Heart left ventricle (tissue), 16 donors: ENCODE measurements at regions of chr16 and their contacts with region 1.

Region 1: GRCh38 chr16:68503334-68503733 is 35.8 kb upstream of the ZFP90 start:
- DNase-seq: no peak
- ATAC-seq: no peak
- H3K4me3 ChIP-seq: no peak overlapping the region
- H3K27ac ChIP-seq: no peak overlapping the region
- H3K4me1 ChIP-seq: no peaks in the 10 kb centered on the region
- H3K27me3 ChIP-seq: no peaks in the 10 kb centered on the region
- CTCF ChIP-seq: no peak
- POLR2A ChIP-seq: no peak

Region 2: DNA sequence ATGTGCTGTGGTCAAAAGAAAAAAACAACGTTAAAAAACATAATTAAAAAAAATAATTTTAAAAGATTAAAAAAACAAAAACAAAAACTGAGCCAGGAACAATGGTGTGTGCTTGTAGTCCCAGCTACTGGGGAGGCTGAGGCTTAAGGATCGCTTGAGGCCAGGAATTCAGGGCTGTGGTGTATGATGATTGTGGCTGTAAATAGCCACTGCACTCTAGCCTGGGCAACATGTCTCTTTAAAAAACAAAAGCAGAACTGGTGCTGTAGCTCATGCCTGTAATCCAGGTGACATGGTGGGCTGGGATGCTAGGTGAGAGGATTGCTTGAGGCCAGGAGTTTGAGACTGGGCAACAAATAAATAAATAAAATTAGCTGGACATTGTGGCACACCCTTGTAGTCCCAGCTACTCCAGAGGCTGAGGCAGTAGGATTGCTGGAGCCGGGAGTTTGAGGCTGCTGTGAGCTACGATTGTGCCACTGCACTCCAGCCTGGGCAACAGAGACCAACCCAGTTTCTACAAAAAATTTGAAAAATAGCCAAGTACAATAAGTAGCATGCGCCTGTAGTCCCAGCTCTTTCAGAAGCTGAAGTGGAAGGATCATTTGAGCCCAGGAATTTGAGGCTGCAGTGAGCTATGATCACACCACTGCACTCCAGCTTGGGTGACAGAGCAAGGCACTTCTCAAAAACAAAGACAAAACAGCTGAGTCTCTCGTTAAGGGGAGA is 374.6 kb before region 1 on chr16:
- intact Hi-C with region 1: no loop called
- DNase-seq: no peak
- ATAC-seq: peak; percentile 56 to 69 (median 60)
- H3K4me3 ChIP-seq: no peak overlapping the region
- H3K27ac ChIP-seq: peak overlapping the region in 7 of 12 donors; percentile 7 to 44 (median 28)
- H3K4me1 ChIP-seq: peaks cover 0 to 40% (median 17%) of the 10 kb centered on the region in 12 donors
- H3K27me3 ChIP-seq: no peaks in the 10 kb centered on the region
- CTCF ChIP-seq: no peak
- POLR2A ChIP-seq: no peak

Region 3: GRCh38 chr16:68406451-68407152 is 96.7 kb before region 1 on chr16:
- intact Hi-C with region 1: loop called in 1 of 10 experiments (anchors 10 kb)
- DNase-seq: no peak
- ATAC-seq: no peak
- H3K4me3 ChIP-seq: no peak overlapping the region
- H3K27ac ChIP-seq: no peak overlapping the region
- H3K4me1 ChIP-seq: no peaks in the 10 kb centered on the region
- H3K27me3 ChIP-seq: peaks cover 0 to 24% (median 0%) of the 10 kb centered on the region in 9 donors
- CTCF ChIP-seq: no peak
- POLR2A ChIP-seq: no peak

Region 4: GRCh38 chr16:68786685-68787418 is 283.5 kb after region 1 on chr16:
- intact Hi-C with region 1: no loop called
- DNase-seq: peak in 2 of 5 donors; percentile 13 to 20
- ATAC-seq: peak in 2 of 4 donors; percentile 24 to 28
- H3K4me3 ChIP-seq: no peak overlapping the region
- H3K27ac ChIP-seq: no peak overlapping the region
- H3K4me1 ChIP-seq: no peaks in the 10 kb centered on the region
- H3K27me3 ChIP-seq: peaks cover 0 to 3% (median 0%) of the 10 kb centered on the region in 9 donors
- CTCF ChIP-seq: no peak
- POLR2A ChIP-seq: no peak